A673 (cell line): ENCODE measurements at regions of chr19 and their contacts with region 1.

Region 1: DNA sequence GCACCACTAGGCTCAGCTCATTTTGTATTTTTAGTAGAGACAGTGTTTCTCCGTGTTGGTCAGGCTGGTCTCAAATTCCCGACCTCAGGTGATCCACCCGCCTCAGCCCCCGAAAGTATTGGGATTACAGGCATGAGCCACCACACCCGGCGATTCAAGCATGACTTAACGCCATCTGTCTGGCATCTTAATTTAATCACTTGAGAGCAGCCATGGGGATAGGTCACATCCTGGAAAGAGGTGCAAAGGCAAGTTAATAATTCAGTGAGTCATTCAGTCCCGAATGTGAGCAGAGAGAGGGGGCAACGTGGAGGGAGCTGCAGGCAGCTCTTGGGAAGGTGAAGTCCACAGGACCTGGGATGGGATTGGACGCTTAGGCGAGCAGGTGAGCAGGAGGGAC is 31.7 kb upstream of the USP29 start:
- DNase-seq: no peak
- H3K4me3 ChIP-seq: no peak overlapping the region
- H3K27ac ChIP-seq: no peak overlapping the region
- H3K4me1 ChIP-seq: no peaks in the 10 kb centered on the region
- H3K27me3 ChIP-seq: no peaks in the 10 kb centered on the region
- CTCF ChIP-seq: no peak

Region 2: DNA sequence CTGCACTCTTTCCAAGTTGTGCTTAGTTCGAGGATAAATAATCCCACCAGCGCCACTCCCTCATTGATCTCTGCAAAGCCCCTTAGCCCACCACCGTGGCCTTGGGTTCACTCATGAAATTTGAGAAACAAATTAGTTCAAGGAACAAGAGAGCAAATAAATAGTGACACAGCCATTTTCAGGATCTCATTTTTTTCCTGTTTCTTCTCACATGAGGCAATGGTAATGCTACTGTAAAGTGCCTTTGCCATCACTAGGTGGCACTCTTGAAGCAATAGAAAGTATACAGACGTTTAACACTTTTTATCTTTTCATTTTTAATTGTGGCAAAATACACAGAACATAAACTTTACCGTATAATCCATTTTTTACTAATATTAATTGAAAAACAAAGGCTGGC is 339.8 kb before region 1 on chr19:
- CTCF ChIA-PET with region 1: no interaction called
- POLR2A ChIA-PET with region 1: no interaction called
- intact Hi-C with region 1: no loop called
- DNase-seq: peak; percentile 52
- H3K4me3 ChIP-seq: no peak overlapping the region
- H3K27ac ChIP-seq: no peak overlapping the region
- H3K4me1 ChIP-seq: peaks cover 11% of the 10 kb centered on the region
- H3K27me3 ChIP-seq: no peaks in the 10 kb centered on the region
- CTCF ChIP-seq: peak; percentile 64

Region 3: DNA sequence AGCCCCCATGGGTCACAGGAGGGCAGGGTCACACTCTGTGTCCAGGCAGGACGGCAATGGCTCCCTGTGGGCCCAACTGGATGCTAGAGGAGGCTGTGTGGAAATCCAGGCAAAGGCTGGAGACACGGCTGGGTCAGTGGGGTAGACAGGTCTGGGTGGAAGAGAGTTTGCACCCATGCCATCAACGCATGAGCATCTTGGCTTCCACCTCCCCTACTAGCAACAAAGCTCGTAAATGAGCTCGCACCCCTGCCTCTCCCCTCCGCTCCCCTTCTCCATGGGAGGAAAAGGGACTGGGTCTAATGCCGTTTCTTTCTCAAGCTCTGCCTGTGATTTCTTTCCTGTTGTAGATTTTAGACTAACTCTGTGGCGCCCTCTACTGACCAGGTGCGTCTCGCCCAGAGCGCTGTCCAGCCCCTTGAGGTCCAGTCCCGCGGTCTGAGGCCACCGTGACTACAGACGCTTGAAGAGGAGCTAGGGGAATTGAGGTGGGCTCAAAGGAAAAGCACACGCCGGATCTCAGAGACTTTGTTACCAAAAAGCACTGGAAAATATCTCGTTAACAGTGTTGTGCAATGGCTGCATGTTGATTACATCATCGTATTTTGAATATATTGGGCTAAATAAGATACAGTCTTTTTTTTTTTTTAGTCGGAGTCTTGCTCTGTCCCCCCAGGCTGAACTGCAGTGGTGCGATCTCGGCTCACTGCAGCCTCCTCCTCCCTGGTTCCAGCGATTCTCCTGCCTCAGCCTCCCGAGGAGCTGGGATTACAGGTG is 19.0 kb before region 1 on chr19:
- CTCF ChIA-PET with region 1: no interaction called
- POLR2A ChIA-PET with region 1: interaction called, 10 read pairs
- intact Hi-C with region 1: no loop called
- DNase-seq: peak; percentile 53
- H3K4me3 ChIP-seq: no peak overlapping the region
- H3K27ac ChIP-seq: no peak overlapping the region
- H3K4me1 ChIP-seq: no peaks in the 10 kb centered on the region
- H3K27me3 ChIP-seq: no peaks in the 10 kb centered on the region
- CTCF ChIP-seq: peak; percentile 72

Region 4: DNA sequence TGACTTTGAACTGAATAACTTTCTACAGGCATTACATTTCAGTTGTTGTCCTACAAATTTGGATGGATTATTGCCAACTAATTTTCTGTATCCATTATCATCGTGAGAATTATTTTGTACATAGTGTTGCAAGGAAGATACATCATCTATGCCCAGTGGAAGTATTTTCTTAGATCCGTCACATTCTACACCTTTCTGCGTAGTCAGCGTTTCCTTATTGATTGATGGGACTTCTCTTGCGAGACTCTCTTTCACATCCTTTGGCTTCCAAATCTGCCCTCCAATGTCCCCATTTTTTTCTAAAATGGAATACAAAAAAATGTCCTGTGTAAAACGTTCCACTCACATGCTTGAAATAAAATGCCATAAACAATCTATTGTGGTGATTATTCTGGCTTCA is 47.7 kb after region 1 on chr19:
- CTCF ChIA-PET with region 1: no interaction called
- POLR2A ChIA-PET with region 1: no interaction called
- intact Hi-C with region 1: no loop called
- DNase-seq: no peak
- H3K4me3 ChIP-seq: no peak overlapping the region
- H3K27ac ChIP-seq: no peak overlapping the region
- H3K4me1 ChIP-seq: no peaks in the 10 kb centered on the region
- H3K27me3 ChIP-seq: peaks cover 3% of the 10 kb centered on the region
- CTCF ChIP-seq: no peak

Region 5: GRCh38 chr19:57263244-57263741 is 175.2 kb after region 1 on chr19:
- CTCF ChIA-PET with region 1: no interaction called
- POLR2A ChIA-PET with region 1: no interaction called
- intact Hi-C with region 1: no loop called
- DNase-seq: no peak
- H3K4me3 ChIP-seq: no peak overlapping the region
- H3K27ac ChIP-seq: no peak overlapping the region
- H3K4me1 ChIP-seq: no peaks in the 10 kb centered on the region
- H3K27me3 ChIP-seq: no peaks in the 10 kb centered on the region
- CTCF ChIP-seq: no peak